ENCODE measurements at regions of chr10 and their contacts with region 1.

Region 1: DNA sequence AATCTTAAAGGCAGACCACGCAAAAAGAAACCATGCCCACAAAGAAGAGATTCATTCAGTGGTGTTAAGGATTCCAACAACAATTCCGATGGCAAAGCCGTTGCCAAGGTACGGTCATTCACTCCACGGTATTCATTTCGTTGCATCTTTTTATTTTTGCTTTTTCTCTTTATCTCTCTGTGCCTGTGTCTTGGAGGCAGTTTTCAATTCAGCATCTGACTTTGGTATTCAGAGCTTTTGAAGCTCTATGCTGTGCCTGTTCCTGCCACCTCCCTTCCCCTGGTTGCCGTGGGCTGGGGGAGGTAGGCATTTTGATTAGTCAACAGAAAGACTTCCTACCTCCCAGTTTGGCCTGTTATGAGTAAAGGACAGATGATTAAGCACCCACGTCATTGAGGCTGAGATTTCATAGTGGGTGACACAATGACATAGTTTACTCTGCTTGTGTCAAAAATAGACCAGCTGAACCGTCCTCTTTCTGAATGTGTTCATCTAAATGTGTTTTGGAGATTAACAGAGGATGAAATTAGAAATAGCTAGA is 149.5 kb downstream of the ARID5B start:
- DNase-seq: peak; percentile 80 to 87
- ATAC-seq: peak; percentile 62 to 70
- H3K4me3 ChIP-seq: peak overlapping the region; percentile 70 to 79 (median 74)
- H3K27ac ChIP-seq: peak overlapping the region; percentile 95 to 99 (median 96)
- H3K4me1 ChIP-seq: peaks cover 35 to 64% of the 10 kb centered on the region in 2 donors
- H3K27me3 ChIP-seq: no peaks in the 10 kb centered on the region
- CTCF ChIP-seq: no peak
- POLR2A ChIP-seq: peak; percentile 81 to 94

Region 2: GRCh38 chr10:60944159-60944909 is 1106.6 kb before region 1 on chr10 and contains the start of gene RHOBTB1:
- in situ Hi-C with region 1: loop called in 1 of 4 experiments (anchors 25 kb)
- intact Hi-C with region 1: loop called (anchors 5 kb)
- DNase-seq: peak; percentile 72 to 87
- ATAC-seq: peak; percentile 84 to 87
- H3K4me3 ChIP-seq: peak within 1 kb of the TSS; percentile 87 to 93 (median 90)
- H3K27ac ChIP-seq: peak within 1 kb of the TSS; percentile 97 to 100 (median 99)
- H3K4me1 ChIP-seq: peaks cover 27 to 44% of the 10 kb centered on the region in 2 donors
- H3K27me3 ChIP-seq: no peaks in the 10 kb centered on the region
- CTCF ChIP-seq: no peak
- POLR2A ChIP-seq: peak; percentile 97 to 98
- total RNA-seq, gene RHOBTB1: 22.2 to 47.7 (median 33.5) TPM

Region 3: DNA sequence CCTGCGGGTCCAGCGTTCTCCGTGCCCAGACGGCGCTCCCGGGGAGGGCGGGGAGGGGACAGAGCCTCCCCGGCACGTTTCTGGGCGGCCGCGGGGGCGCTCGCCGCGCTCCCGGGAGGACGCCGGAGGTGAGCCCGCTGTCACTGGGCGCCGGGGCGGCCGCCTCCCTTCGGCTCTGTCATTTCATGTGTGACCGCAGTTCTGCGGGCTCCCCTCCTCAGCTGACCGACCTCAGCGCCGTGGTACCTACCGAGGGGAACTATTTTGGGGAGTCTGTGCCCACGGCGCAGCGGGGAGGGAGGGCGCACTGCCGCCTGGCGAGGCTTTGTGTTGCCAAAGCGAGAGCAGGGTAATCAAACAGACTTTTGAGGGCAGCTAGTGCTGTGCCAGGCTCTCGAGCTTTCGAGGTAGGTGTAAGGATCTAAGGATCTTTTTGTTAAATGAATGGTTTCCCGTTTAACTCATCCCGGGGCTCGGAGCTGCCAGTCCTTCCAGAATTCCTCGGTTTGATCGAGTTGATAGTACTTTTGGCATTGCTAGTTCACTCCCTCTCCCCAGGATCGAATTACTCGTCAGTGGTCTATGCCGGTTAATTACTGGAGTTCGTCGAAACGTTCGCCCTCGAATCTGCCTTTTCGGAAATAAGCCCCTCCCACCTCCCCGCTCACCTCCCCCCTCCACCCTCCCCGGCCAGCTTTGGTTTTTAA is 147.6 kb before region 1 on chr10:
- in situ Hi-C with region 1: no loop called
- intact Hi-C with region 1: loop called (anchors 2 kb)
- DNase-seq: peak; percentile 13 to 34
- ATAC-seq: peak; percentile 44 to 56
- H3K4me3 ChIP-seq: peak overlapping the region; percentile 76 to 91 (median 89)
- H3K27ac ChIP-seq: peak overlapping the region; percentile 90 to 97 (median 94)
- H3K4me1 ChIP-seq: peaks cover 27 to 37% of the 10 kb centered on the region in 2 donors
- H3K27me3 ChIP-seq: no peaks in the 10 kb centered on the region
- CTCF ChIP-seq: peak in 3 of 5 experiments; percentile 13 to 38 (median 31)
- POLR2A ChIP-seq: peak; percentile 49 to 63

Region 4: DNA sequence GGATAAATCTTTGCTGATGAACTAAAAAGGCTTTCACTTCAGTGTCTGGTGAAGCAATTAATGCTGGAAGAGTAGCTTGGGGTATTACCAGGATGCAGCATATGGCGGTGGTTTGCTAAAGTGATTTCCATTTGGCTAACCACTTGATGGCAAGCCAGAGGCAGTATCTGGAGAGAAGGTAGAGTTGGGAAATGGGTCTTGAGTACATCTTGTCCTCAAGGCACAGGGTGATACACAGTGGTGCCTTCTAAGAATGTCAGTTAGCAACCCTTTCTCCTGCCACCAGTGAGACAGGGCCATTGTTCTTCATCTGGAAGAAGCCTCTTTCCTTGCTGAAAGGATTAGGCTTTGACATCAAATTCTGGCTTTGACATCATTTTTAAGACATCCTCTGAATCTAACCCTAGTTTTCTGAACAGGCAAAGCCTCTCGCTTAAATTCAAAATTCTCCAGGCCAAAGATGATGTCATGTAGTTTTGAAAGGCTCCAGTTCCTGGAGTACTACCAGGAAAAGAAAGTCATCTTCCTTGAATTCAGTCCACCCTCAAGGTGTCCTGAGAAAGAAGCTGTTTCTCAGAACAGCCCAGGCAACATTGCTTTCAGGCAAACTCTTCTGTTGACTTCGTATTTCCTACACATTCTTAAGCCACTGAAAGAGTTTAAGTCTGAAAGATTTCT is 13.0 kb after region 1 on chr10:
- in situ Hi-C with region 1: no loop called
- intact Hi-C with region 1: loop called (anchors 1 kb)
- DNase-seq: peak; percentile 84 to 87
- ATAC-seq: peak; percentile 91 to 94
- H3K4me3 ChIP-seq: peak overlapping the region in 3 of 4 donors; percentile 20 to 37 (median 30)
- H3K27ac ChIP-seq: peak overlapping the region; percentile 95 to 99 (median 96)
- H3K4me1 ChIP-seq: peaks cover 72 to 97% of the 10 kb centered on the region in 2 donors
- H3K27me3 ChIP-seq: no peaks in the 10 kb centered on the region
- CTCF ChIP-seq: no peak
- POLR2A ChIP-seq: peak in 1 of 2 donors; percentile 50

Region 5: GRCh38 chr10:62082729-62083411 is 31.9 kb after region 1 on chr10:
- in situ Hi-C with region 1: no loop called
- intact Hi-C with region 1: no loop called
- DNase-seq: no peak
- ATAC-seq: peak in 1 of 2 donors; percentile 14
- H3K4me3 ChIP-seq: peak overlapping the region in 2 of 4 donors; percentile 6 to 7
- H3K27ac ChIP-seq: peak overlapping the region; percentile 95 to 99 (median 96)
- H3K4me1 ChIP-seq: peaks cover 64 to 70% of the 10 kb centered on the region in 2 donors
- H3K27me3 ChIP-seq: no peaks in the 10 kb centered on the region
- CTCF ChIP-seq: no peak
- POLR2A ChIP-seq: no peak

Region 6: GRCh38 chr10:62095181-62096071 is 44.5 kb after region 1 on chr10:
- in situ Hi-C with region 1: no loop called
- intact Hi-C with region 1: loop called (anchors 2 kb)
- DNase-seq: no peak
- ATAC-seq: no peak
- H3K4me3 ChIP-seq: no peak overlapping the region
- H3K27ac ChIP-seq: peak overlapping the region; percentile 55 to 91 (median 74)
- H3K4me1 ChIP-seq: peaks cover 34 to 63% of the 10 kb centered on the region in 2 donors
- H3K27me3 ChIP-seq: no peaks in the 10 kb centered on the region
- CTCF ChIP-seq: no peak
- POLR2A ChIP-seq: no peak

Region 7: GRCh38 chr10:63268798-63269503 is 1218.0 kb after region 1 on chr10:
- in situ Hi-C with region 1: no loop called
- intact Hi-C with region 1: loop called (anchors 10 kb)
- DNase-seq: peak; percentile 95
- ATAC-seq: peak; percentile 98
- H3K4me3 ChIP-seq: peak overlapping the region; percentile 51 to 64 (median 54)
- H3K27ac ChIP-seq: peak overlapping the region; percentile 88 to 96 (median 90)
- H3K4me1 ChIP-seq: peaks cover 26% of the 10 kb centered on the region in 2 donors
- H3K27me3 ChIP-seq: no peaks in the 10 kb centered on the region
- CTCF ChIP-seq: peak; percentile 51 to 62 (median 55)
- POLR2A ChIP-seq: peak; percentile 82 to 94

Region 8: GRCh38 chr10:63720072-63720537 is 1669.1 kb after region 1 on chr10:
- in situ Hi-C with region 1: loop called in 2 of 4 experiments (anchors 10 to 25 kb)
- intact Hi-C with region 1: no loop called
- DNase-seq: no peak
- ATAC-seq: peak; percentile 27 to 32
- H3K4me3 ChIP-seq: peak overlapping the region in 1 of 4 donors; percentile 11
- H3K27ac ChIP-seq: peak overlapping the region in 3 of 4 donors; percentile 33 to 61 (median 37)
- H3K4me1 ChIP-seq: peaks cover 10 to 19% of the 10 kb centered on the region in 2 donors
- H3K27me3 ChIP-seq: no peaks in the 10 kb centered on the region
- CTCF ChIP-seq: peak; percentile 88 to 99 (median 94)
- POLR2A ChIP-seq: no peak

Measured in gastrocnemius medialis (tissue), 4 donors.